ENCODE measurements at regions of chr1 and their contacts with region 1.

Region 1: GRCh38 chr1:116538544-116538943 is 32.3 kb downstream of the CD58 start:
- DNase-seq: peak; percentile 78
- ATAC-seq: peak; percentile 73
- H3K4me3 ChIP-seq: no peak overlapping the region
- H3K27ac ChIP-seq: peak overlapping the region; percentile 91
- H3K4me1 ChIP-seq: peaks cover 41% of the 10 kb centered on the region
- H3K27me3 ChIP-seq: no peaks in the 10 kb centered on the region
- CTCF ChIP-seq: no peak

Region 2: DNA sequence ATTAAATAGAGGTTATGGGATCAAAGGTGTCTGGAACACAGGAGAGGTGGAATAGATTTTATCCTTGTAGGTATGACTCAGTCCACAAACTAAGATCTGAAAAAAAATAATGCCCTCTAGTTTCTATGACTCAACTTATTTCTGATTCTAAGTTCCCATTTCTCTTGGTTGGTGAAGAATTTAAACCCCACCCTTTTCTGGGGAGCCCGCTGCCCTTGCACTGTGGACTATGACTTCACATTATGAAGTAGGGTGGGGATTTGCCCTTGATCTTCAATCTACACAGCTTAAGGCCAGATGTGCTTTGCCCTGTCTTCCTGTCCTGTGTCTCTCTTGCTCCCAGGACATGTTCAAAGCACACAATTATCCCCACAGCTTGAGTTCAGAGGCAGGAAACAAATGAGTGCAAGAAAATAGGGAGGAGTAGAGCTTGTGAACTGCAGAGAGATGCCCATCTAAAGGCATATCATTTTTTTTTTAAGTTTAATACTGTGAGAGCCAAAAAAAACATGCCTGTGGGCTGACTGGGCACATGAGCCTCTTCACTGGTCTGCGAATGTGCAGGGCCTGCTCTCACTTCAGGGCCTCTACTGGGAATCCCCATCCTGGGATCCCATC is 29.5 kb before region 1 on chr1:
- CTCF ChIA-PET with region 1: no interaction called
- POLR2A ChIA-PET with region 1: no interaction called
- intact Hi-C with region 1: loop called (anchors 2 kb)
- DNase-seq: peak; percentile 88
- ATAC-seq: peak; percentile 59
- H3K4me3 ChIP-seq: peak overlapping the region; percentile 2; the same call in 1 of the 2 replicates
- H3K27ac ChIP-seq: peak overlapping the region; percentile 93
- H3K4me1 ChIP-seq: peaks cover 64% of the 10 kb centered on the region
- H3K27me3 ChIP-seq: no peaks in the 10 kb centered on the region
- CTCF ChIP-seq: no peak

Region 3: DNA sequence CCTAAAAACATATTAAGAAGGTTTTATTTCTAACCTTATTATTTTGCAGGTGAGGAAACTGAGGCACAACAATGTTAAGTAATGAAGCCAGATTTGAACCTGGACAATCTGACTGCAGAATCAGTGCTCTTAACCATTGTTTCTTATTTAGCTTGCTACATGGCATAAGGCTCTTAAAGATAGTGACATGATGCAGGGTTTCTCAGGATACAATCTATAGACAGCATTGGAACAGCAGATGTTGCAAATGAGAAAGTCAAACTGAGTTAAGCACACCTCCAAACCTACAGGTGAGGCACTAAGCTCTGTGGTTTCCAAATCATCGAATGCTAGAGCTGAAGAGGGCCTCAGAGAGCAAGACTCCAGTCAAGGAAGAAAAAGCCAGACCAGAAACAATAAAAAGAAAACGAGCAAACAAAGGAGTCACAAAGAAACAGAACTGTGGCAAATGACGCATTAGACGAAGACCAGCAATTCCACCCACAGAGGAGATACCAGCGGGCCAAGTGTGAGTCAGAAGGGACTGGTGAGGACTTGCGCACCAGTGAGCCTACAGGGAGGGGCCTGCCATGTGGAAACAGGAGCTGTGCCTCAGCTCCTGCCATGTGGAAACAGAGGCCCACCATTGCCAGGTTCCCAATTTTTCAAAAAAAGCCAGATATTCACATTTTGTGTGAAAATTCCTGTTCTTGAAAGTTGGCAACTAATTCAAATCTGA is 17.9 kb after region 1 on chr1:
- CTCF ChIA-PET with region 1: interaction called, 3 read pairs
- POLR2A ChIA-PET with region 1: no interaction called
- intact Hi-C with region 1: loop called (anchors 1 kb)
- DNase-seq: peak; percentile 98
- ATAC-seq: peak; percentile 99
- H3K4me3 ChIP-seq: no peak overlapping the region
- H3K27ac ChIP-seq: peak overlapping the region; percentile 94
- H3K4me1 ChIP-seq: peaks cover 34% of the 10 kb centered on the region
- H3K27me3 ChIP-seq: no peaks in the 10 kb centered on the region
- CTCF ChIP-seq: peak; percentile 50

Region 4: DNA sequence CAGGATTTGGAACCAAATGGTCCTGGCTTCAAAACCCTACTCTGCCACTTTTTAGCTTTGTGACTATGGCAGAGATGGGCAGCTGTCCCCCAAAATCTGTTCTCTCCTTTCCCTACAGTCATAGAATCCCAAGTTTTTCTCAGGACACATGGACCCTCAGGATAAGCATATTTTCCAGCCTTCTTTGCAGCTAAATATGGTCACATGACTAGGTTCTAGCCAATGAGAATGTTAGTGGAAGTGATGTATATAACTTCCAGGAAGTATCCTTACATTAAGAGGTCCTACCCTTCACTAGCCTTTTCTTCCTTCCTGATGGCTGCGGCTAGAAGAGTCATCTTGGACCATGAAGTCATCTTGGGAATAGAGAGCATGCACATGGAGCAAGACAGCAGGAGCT is 123.1 kb after region 1 on chr1:
- CTCF ChIA-PET with region 1: no interaction called
- POLR2A ChIA-PET with region 1: no interaction called
- intact Hi-C with region 1: no loop called
- DNase-seq: no peak
- ATAC-seq: no peak
- H3K4me3 ChIP-seq: no peak overlapping the region
- H3K27ac ChIP-seq: no peak overlapping the region
- H3K4me1 ChIP-seq: peaks cover 13% of the 10 kb centered on the region; the same call in 1 of the 2 replicates
- H3K27me3 ChIP-seq: no peaks in the 10 kb centered on the region
- CTCF ChIP-seq: no peak

Region 5: DNA sequence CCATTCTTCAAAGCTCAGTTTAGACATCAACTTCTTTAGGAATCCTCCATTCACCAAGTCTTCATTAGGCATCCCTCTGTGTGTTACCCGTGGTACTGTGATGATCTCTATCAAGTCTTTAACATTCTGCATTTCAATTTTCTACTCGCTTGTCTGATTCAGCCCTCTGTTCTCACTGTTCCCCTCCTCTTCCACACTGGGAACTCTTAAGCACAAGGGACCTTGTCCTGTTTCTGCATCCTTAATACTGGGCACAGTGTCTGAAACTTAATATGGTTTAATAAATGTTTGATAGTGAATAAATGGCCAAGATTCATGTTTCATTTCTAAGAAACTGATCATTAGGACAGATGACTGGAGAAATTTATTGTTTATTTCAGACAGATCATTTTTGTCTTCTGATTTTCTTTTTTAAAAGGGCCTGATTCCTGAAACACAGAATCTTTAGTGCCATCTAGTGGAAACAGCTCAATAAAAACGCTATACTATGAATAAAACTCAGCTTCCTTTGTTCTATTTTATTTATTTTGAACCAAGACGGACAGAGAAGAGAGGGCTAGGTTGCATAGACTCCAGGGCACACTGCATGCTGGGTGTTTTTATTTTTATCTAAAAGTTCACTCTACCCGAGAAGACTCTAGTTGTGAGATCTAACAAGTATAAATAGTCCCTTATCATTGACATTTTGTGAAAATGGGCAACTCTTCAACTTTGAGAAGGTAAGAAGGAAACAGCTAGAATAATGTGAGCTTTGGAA is 590.0 kb after region 1 on chr1:
- CTCF ChIA-PET with region 1: no interaction called
- POLR2A ChIA-PET with region 1: no interaction called
- intact Hi-C with region 1: no loop called
- DNase-seq: peak; percentile 72
- ATAC-seq: peak; percentile 67
- H3K4me3 ChIP-seq: 0 out of 2 replicates have a peak overlapping the region, but pooled peaks have one; percentile 14
- H3K27ac ChIP-seq: no peak overlapping the region
- H3K4me1 ChIP-seq: peaks cover 10% of the 10 kb centered on the region; the same call in 1 of the 2 replicates
- H3K27me3 ChIP-seq: no peaks in the 10 kb centered on the region
- CTCF ChIP-seq: peak; percentile 78

Measured in PC-3 (cell line).